Naive thymus-derived CD4-positive, alpha-beta T cell (primary cell): ENCODE measurements at regions of chr16 and their contacts with region 1.

Region 1: DNA sequence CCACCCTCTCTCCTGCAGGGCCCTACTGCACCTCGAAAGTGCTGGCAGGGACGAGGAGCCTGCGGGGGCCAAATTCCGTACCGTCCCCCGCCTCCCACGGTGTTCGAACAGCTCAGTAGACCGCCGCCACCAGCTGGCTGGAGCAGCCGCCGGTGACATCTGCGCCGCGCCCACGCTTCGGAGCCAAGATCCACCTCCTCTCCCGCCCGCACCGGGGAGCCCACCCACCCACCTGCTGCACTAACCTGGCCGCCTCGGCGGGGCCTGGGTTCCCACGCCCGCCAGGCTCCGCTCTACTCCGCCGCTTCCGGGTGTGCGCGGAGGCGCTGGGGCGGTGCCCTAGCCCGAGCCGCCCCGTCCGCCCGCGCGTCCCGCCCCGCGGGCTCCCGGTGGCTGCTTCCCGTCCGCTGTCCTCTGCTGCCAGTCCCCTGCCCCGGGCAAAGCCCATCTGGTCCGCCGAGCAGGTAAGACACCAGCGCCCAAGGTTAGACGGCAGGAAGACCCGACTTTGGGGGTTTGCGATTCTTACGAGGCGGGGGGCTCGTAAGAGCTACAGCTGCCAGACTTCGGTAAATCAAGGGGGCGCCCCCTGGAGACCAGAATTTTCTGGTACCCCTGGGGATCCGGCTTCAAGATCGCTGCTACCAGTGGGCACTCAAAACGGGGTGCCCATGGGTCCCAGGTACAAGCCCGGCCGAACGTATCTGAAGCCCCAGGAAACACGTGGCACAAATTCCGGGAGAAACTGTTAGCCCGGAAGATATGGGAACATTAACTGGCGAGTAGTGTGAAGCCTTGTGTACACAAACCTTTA is at the starts of genes FBXL8 and TRADD:
- DNase-seq: peak; percentile 73 to 91 (median 82)
- ATAC-seq: peak; percentile 78
- H3K4me3 ChIP-seq: peak within 1 kb of the TSS; percentile 78
- H3K4me3 Mint-ChIP-seq: peak within 1 kb of the TSS; percentile 76 to 93 (median 87)
- H3K27ac ChIP-seq: peak within 1 kb of the TSS; percentile 94
- H3K27ac Mint-ChIP-seq: peak within 1 kb of the TSS; percentile 94 to 99 (median 95)
- H3K4me1 ChIP-seq: peaks cover 49 to 59% of the 10 kb centered on the region in 2 donors
- H3K4me1 Mint-ChIP-seq: peaks cover 25 to 66% (median 51%) of the 10 kb centered on the region in 7 donors
- H3K27me3 ChIP-seq: peaks cover 1 to 19% of the 10 kb centered on the region in 2 donors
- H3K27me3 Mint-ChIP-seq: peaks cover 5 to 12% (median 10%) of the 10 kb centered on the region in 5 donors
- total RNA-seq, gene FBXL8: 8.7 to 84.7 (median 9.7) TPM
- total RNA-seq, gene TRADD: 47.0 to 92.8 (median 52.8) TPM

Region 2: GRCh38 chr16:66934153-66934838 is 225.5 kb before region 1 on chr16 and contains the start of gene CIAO2B:
- CTCF ChIA-PET with region 1: no interaction called
- POLR2A ChIA-PET with region 1: no interaction called
- intact Hi-C with region 1: loop called in 1 of 2 experiments (anchors 1 kb)
- DNase-seq: peak; percentile 86 to 95 (median 91)
- ATAC-seq: peak; percentile 93
- H3K4me3 ChIP-seq: peak within 1 kb of the TSS; percentile 96
- H3K4me3 Mint-ChIP-seq: peak within 1 kb of the TSS; percentile 91 to 99 (median 98)
- H3K27ac ChIP-seq: peak within 1 kb of the TSS; percentile 97
- H3K27ac Mint-ChIP-seq: peak within 1 kb of the TSS; percentile 96 to 99 (median 98)
- H3K4me1 ChIP-seq: peaks cover 24 to 35% of the 10 kb centered on the region in 2 donors
- H3K4me1 Mint-ChIP-seq: peaks cover 38 to 63% (median 54%) of the 10 kb centered on the region in 7 donors
- H3K27me3 ChIP-seq: no peaks in the 10 kb centered on the region
- H3K27me3 Mint-ChIP-seq: no peaks in the 10 kb centered on the region
- total RNA-seq, gene CIAO2B: 47.0 to 116 (median 58.5) TPM

Region 3: GRCh38 chr16:66954097-66954659 is 205.6 kb before region 1 on chr16:
- CTCF ChIA-PET with region 1: interaction called, 3 read pairs
- POLR2A ChIA-PET with region 1: no interaction called
- intact Hi-C with region 1: loop called (anchors 1 kb)
- DNase-seq: peak; percentile 46 to 78 (median 67)
- ATAC-seq: peak; percentile 86
- H3K4me3 ChIP-seq: no peak overlapping the region
- H3K4me3 Mint-ChIP-seq: peak overlapping the region in 1 of 10 donors; percentile 5
- H3K27ac ChIP-seq: no peak overlapping the region
- H3K27ac Mint-ChIP-seq: peak overlapping the region in 1 of 9 donors; percentile 4
- H3K4me1 ChIP-seq: no peaks in the 10 kb centered on the region
- H3K4me1 Mint-ChIP-seq: peaks cover 11 to 27% (median 15%) of the 10 kb centered on the region in 7 donors
- H3K27me3 ChIP-seq: no peaks in the 10 kb centered on the region
- H3K27me3 Mint-ChIP-seq: peaks cover 31 to 40% (median 35%) of the 10 kb centered on the region in 5 donors

Region 4: GRCh38 chr16:66984892-66985311 is 174.9 kb before region 1 on chr16:
- CTCF ChIA-PET with region 1: interaction called, 4 read pairs
- POLR2A ChIA-PET with region 1: interaction called, 3 read pairs
- intact Hi-C with region 1: loop called in 1 of 2 experiments (anchors 2 kb)
- DNase-seq: peak in 1 of 9 donors; percentile 70
- ATAC-seq: peak; percentile 26
- H3K4me3 ChIP-seq: no peak overlapping the region
- H3K4me3 Mint-ChIP-seq: peak overlapping the region in 4 of 10 donors; percentile 6 to 58 (median 22)
- H3K27ac ChIP-seq: peak overlapping the region; percentile 53
- H3K27ac Mint-ChIP-seq: peak overlapping the region; percentile 48 to 98 (median 83)
- H3K4me1 ChIP-seq: peaks cover 17 to 18% of the 10 kb centered on the region in 2 donors
- H3K4me1 Mint-ChIP-seq: peaks cover 6 to 67% (median 17%) of the 10 kb centered on the region in 7 donors
- H3K27me3 ChIP-seq: no peaks in the 10 kb centered on the region
- H3K27me3 Mint-ChIP-seq: no peaks in the 10 kb centered on the region

Region 5: DNA sequence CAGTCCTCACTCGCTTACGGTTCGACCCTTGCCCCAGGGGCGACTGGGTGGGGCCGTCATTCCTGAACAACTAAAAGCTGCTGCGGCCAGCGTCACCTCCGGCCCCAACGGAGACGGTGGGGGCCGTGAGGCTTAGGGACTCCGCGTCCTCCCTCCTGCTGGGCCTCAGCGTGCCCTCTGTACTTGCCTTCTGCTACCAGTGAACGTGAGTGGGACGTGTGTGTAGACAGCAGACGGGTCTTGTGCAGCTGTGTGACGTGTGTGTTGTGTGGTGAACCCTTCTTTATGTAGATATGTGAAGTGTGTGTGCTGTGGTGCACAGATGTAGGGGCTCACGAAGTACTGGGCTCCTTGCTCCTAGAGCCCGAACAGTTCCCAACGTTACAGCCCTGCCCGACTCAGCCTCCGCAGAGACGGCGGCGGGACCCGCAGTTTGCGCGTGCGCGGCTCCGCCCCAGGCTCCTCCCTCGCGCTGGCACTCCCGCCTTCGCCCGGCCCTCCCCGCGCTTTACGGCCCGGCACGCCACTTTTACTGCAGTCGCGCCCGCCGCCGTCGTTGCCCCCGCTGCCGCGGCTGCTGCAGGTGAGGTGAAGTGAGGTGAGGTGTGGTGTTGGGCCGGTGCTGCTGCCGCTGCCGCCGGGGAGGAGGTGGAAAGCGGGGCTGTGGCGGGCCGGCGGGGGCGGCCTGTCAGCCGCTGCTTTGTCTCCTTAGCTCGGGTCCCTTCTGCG is 50.2 kb before region 1 on chr16 and contains the start of gene PHAF1:
- CTCF ChIA-PET with region 1: interaction called, 3 read pairs
- POLR2A ChIA-PET with region 1: interaction called, 3 read pairs
- intact Hi-C with region 1: loop called in 1 of 2 experiments (anchors 1 kb)
- DNase-seq: peak; percentile 93 to 99 (median 97)
- ATAC-seq: peak; percentile 95
- H3K4me3 ChIP-seq: peak within 1 kb of the TSS; percentile 91
- H3K4me3 Mint-ChIP-seq: peak within 1 kb of the TSS; percentile 91 to 96 (median 94)
- H3K27ac ChIP-seq: peak within 1 kb of the TSS; percentile 78
- H3K27ac Mint-ChIP-seq: peak within 1 kb of the TSS; percentile 81 to 95 (median 87)
- H3K4me1 ChIP-seq: peaks cover 9 to 11% of the 10 kb centered on the region in 2 donors
- H3K4me1 Mint-ChIP-seq: peaks cover 19 to 43% (median 31%) of the 10 kb centered on the region in 7 donors
- H3K27me3 ChIP-seq: no peaks in the 10 kb centered on the region
- H3K27me3 Mint-ChIP-seq: no peaks in the 10 kb centered on the region
- total RNA-seq, gene PHAF1: 17.8 to 29.6 (median 21.2) TPM

Region 6: GRCh38 chr16:67173808-67174705 is 14.3 kb after region 1 on chr16:
- CTCF ChIA-PET with region 1: interaction called, 5 read pairs
- POLR2A ChIA-PET with region 1: interaction called, 31 read pairs
- intact Hi-C with region 1: loop called (anchors 1 kb)
- DNase-seq: peak in 7 of 9 donors; percentile 42 to 78 (median 47)
- ATAC-seq: peak; percentile 87
- H3K4me3 ChIP-seq: peak overlapping the region; percentile 61
- H3K4me3 Mint-ChIP-seq: peak overlapping the region; percentile 70 to 94 (median 86)
- H3K27ac ChIP-seq: no peak overlapping the region
- H3K27ac Mint-ChIP-seq: peak overlapping the region in 2 of 9 donors; percentile 72 to 89
- H3K4me1 ChIP-seq: peaks cover 24 to 29% of the 10 kb centered on the region in 2 donors
- H3K4me1 Mint-ChIP-seq: peaks cover 15 to 72% (median 36%) of the 10 kb centered on the region in 7 donors
- H3K27me3 ChIP-seq: peaks cover 7 to 22% of the 10 kb centered on the region in 2 donors
- H3K27me3 Mint-ChIP-seq: peaks cover 0 to 60% (median 57%) of the 10 kb centered on the region in 5 donors

Region 7: DNA sequence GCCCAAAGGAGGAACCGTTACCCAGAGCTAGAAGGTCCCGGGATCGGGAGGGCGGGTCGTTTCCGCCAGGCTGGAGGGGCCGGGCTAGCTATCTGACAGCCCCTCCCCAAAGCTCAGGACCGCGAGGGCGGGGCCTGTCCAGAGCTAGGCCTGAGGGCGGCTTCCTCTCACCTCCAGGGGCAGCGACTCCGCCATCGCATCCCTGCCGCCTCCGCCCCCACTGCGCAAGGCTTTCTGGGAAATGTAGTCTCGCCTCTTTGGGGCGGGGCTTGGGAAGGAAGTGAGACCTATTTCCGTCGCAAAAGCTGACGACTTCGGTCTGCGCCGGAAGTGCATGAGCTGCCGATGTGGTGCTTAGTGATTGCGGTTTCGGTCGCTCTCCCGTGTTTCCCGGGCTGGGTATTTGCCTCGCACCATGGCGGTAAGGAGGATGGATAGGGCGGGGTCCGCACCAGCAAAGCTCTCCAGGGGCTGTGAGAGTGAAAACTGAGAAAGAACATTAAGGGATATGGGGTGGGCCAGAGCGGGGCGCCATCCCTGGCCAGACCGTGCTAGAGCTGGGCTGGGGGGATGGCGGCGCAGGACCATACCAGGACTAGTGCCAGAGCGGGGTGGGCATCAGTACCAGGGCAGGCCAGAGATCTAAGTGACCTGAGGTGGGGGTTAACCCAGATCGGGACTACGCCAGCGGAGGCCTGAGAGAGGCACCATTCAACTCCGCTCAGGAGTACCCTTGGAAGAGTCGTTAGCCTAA is 67.2 kb after region 1 on chr16 and contains the start of gene TMEM208:
- CTCF ChIA-PET with region 1: interaction called, 3 read pairs
- POLR2A ChIA-PET with region 1: interaction called, 8 read pairs
- intact Hi-C with region 1: loop called in 1 of 2 experiments (anchors 2 kb)
- DNase-seq: peak; percentile 94 to 99 (median 97)
- ATAC-seq: peak; percentile 99
- H3K4me3 ChIP-seq: peak within 1 kb of the TSS; percentile 90
- H3K4me3 Mint-ChIP-seq: peak within 1 kb of the TSS; percentile 94 to 100 (median 98)
- H3K27ac ChIP-seq: peak within 1 kb of the TSS; percentile 85
- H3K27ac Mint-ChIP-seq: peak within 1 kb of the TSS; percentile 93 to 100 (median 99)
- H3K4me1 ChIP-seq: peaks cover 14 to 38% of the 10 kb centered on the region in 2 donors
- H3K4me1 Mint-ChIP-seq: peaks cover 37 to 62% (median 50%) of the 10 kb centered on the region in 7 donors
- H3K27me3 ChIP-seq: no peaks in the 10 kb centered on the region
- H3K27me3 Mint-ChIP-seq: no peaks in the 10 kb centered on the region
- total RNA-seq, gene TMEM208: 27.6 to 44.8 (median 32.7) TPM

Region 8: DNA sequence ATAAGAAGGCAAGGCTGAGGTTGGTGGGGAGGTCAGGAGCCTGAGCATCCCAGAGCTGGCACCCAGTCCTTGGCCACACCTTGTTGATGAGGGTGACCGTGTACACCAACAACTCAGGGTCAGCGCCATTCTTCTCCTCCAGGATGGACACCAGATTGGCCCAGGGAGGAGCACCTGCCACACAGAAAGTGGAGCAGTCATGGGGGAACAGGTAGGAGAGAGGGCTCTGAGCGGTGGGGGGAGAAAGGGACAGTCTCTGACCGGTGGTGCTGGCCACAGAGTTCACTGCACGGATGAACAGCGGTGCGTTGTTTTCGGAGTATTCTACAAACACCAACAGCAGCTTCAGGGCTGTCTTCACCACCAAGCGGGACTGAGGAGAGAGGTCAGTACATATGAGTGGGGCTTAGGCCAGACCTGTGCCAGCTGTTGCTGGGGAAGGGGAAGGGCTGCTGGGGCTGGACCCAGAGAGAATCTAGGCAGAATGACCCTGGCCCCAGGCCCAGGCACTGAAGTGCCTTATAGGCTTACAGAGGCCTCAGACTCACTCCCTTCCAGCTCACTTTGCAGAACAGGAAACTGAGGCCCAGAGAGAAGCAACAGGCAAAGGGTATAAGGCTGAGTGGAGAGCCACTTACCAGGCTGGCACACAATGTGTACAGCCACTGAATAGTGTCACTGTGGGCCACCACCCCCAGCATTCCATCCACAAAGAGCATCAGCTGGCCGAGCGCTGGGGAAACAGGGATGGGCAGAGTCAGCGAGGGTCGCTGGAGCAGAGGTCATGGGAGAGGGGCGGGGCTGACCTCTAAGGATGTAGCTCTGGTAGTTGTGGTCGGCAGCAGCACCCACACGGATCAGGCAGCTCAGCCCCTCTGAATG is 77.8 kb after region 1 on chr16:
- CTCF ChIA-PET with region 1: no interaction called
- POLR2A ChIA-PET with region 1: no interaction called
- intact Hi-C with region 1: no loop called
- DNase-seq: no peak
- ATAC-seq: no peak
- H3K4me3 ChIP-seq: no peak overlapping the region
- H3K4me3 Mint-ChIP-seq: no peak overlapping the region
- H3K27ac ChIP-seq: no peak overlapping the region
- H3K27ac Mint-ChIP-seq: peak overlapping the region in 3 of 9 donors; percentile 16 to 67 (median 23)
- H3K4me1 ChIP-seq: peaks cover 0 to 5% of the 10 kb centered on the region in 2 donors
- H3K4me1 Mint-ChIP-seq: peaks cover 0 to 28% (median 4%) of the 10 kb centered on the region in 7 donors
- H3K27me3 ChIP-seq: no peaks in the 10 kb centered on the region
- H3K27me3 Mint-ChIP-seq: no peaks in the 10 kb centered on the region